ENCODE measurements at regions of chr6 and their contacts with region 1.

Region 1: GRCh38 chr6:142566628-142567396 is 265.0 kb downstream of the ADGRG6 start:
- DNase-seq: peak; percentile 68
- H3K4me3 Mint-ChIP-seq: no peak overlapping the region
- H3K27ac Mint-ChIP-seq: no peak overlapping the region
- H3K4me1 Mint-ChIP-seq: peaks cover 19% of the 10 kb centered on the region
- H3K27me3 Mint-ChIP-seq: no peaks in the 10 kb centered on the region
- CTCF ChIP-seq: peak; percentile 66

Region 2: DNA sequence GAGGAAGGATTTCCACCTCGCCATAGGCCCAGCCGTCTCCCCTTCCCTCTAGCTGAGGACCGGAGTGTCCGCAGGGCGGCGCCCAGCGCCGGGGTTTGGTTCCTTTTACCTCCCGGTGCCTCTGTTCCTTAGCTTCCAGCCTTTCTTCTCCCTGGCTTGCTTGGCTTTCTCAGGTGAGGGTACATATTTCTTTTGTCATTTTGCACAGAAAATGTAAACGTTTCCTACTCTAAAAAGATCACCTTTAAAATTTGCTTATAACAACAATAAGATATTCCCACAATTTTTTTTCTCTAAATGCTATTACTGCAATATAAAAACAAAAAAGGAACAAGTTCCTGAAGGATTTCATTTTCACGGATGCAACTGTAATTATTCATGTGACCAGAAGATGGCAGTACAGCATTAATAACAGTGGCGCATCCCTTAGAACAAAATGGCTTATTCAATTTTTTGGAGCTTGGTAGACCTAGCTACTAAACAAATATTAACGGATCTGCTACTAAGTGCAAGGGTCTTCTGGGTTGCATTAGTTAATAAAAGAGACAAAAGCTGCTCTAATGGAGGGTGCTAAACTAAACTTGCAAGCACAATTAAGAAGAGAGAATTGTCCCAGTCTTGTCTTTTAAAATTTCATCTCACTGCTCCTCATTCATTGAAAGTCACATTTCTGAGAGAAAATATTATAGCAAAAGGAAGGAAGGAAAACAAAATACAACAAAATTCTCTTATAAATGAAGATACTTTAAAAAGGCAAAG is 92.1 kb before region 1 on chr6:
- CTCF ChIA-PET with region 1: interaction called, 5 read pairs
- intact Hi-C with region 1: loop called (anchors 10 kb)
- DNase-seq: peak; percentile 62
- H3K4me3 Mint-ChIP-seq: no peak overlapping the region
- H3K27ac Mint-ChIP-seq: no peak overlapping the region
- H3K4me1 Mint-ChIP-seq: no peaks in the 10 kb centered on the region
- H3K27me3 Mint-ChIP-seq: peaks cover 7% of the 10 kb centered on the region
- CTCF ChIP-seq: peak; percentile 49

Region 3: DNA sequence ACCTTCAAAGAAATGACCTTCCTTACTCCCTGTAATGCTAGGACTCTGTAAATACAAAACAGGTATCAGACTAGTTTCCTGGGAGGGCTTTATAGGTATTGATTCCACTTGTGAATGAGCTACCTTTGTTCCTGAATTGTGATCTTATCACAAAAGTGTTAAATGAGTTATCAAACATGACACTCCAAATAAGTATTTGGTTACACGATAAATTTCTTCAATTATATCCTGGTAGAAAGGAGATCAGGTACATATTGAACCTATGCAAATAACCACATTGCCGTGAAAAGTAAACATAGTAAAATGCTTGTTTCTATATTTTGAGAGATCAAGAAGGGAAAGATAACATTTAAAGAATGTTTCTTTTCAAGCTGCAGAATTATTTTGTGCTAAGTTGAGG is 92.8 kb after region 1 on chr6:
- CTCF ChIA-PET with region 1: no interaction called
- intact Hi-C with region 1: loop called (anchors 10 kb)
- DNase-seq: no peak
- H3K4me3 Mint-ChIP-seq: no peak overlapping the region
- H3K27ac Mint-ChIP-seq: no peak overlapping the region
- H3K4me1 Mint-ChIP-seq: peaks cover 14% of the 10 kb centered on the region
- H3K27me3 Mint-ChIP-seq: peaks cover 32% of the 10 kb centered on the region
- CTCF ChIP-seq: no peak

Region 4: DNA sequence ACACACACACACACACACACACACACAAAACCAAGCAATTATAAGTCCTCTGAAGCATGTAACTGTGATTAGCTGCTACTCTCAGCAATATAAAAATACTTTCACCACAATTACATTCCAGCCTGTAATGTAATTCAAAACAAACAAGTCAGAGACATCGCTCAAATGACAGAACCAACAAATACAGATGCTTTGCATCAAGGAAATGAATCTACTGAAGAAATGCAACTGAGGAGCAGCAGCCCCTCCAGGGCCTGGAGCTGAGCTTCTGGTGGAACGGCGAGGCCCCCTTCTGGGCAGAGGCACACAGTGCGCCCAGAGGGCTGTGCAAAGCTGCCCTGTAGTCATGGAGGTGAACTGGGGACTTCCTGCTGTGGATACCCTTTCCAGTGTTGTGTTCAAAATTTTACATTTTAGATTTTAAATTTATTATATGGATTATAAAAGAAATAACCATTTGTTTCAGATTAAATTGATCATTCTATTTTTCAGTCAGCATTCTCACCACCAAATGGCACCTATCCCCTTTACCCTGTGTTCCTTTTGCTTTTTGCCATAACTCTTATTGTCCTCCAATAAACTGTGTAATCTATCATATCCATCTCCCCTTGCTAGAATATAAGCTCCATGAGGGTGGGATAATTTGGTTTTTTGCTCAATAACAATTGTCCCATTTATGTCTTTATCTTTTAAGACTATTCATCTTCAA is 860.5 kb after region 1 on chr6:
- CTCF ChIA-PET with region 1: no interaction called
- intact Hi-C with region 1: loop called (anchors 10 kb)
- DNase-seq: peak; percentile 66
- H3K4me3 Mint-ChIP-seq: no peak overlapping the region
- H3K27ac Mint-ChIP-seq: no peak overlapping the region
- H3K4me1 Mint-ChIP-seq: no peaks in the 10 kb centered on the region
- H3K27me3 Mint-ChIP-seq: no peaks in the 10 kb centered on the region
- CTCF ChIP-seq: peak; percentile 81

Measured in Calu3 (cell line).